ENCODE measurements at regions of chr17 and their contacts with region 1.

Region 1: DNA sequence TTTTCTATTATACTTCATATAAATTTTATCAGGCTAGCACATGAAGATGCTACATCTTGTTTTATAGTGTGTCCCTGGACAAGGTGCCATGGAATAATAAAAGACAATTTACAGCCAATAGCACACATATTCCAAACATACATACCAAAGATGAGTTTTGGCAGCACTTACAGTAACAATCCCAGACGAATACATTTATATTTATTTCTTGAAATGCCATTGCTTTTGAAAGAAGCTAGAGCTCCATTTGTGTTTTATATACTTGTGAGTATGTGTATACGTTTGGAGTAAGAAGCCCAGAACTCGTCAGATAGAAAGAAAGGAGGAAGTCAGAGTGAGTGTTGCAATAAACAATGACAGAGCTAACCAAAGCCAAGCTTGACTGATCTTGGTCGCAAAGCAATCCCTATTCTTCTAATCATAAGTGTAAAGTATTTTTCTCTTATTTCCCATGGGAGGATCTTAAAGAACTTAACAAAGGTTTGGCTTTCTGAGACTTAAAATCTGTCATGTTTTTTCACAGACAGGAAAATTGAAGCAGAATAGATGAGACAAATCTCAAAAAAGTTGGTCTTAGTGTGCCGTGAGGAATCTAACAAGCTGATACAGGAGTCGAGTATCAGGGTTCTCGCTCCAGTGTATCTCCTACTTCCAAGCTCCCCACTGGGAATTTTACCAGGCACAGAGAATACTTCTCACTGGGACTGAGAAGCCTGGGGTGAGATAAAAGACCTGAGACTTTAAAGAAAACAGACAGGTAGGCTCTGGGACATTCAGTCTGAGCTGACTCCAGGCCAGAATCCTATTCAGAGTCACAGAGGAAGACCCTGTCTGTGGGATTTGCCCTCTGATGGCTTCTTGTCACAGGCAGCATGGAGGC is 175.4 kb downstream of the AATF start:
- DNase-seq: peak; percentile 29 to 79 (median 67)
- H3K4me3 ChIP-seq: no peak overlapping the region
- H3K27ac ChIP-seq: no peak overlapping the region
- H3K4me1 ChIP-seq: peaks cover 2 to 18% (median 5%) of the 10 kb centered on the region in 4 experiments
- H3K27me3 ChIP-seq: no peaks in the 10 kb centered on the region

Region 2: DNA sequence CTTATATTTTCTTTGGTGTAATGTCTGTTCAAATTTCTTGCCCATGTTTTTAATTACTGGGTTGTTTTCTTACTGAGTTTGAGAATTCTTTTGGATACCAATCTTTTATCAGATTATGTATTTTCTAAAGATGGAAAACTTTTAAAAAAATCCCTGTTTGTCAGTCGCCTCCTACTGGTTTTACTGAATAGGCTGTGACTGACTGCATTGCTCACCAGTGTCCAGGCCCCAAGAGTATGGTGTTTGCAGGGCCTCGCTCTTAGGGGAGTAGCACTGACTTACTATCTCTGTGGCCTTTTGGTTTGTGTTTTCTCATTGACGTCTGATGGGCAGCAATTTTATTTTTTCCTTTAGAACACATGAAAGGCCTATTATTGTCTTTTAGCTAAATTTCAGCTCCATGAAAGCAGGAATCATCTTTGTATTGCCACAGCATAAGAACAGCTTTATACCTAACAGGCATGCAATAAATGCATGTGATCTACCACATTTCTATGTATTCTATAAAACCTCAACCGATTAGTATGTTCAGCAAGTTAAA is 13.0 kb after region 1 on chr17:
- CTCF ChIA-PET with region 1: interaction called, 10 read pairs
- POLR2A ChIA-PET with region 1: no interaction called
- DNase-seq: no peak
- H3K4me3 ChIP-seq: no peak overlapping the region
- H3K27ac ChIP-seq: no peak overlapping the region
- H3K4me1 ChIP-seq: peaks cover 0 to 24% (median 12%) of the 10 kb centered on the region in 4 experiments
- H3K27me3 ChIP-seq: no peaks in the 10 kb centered on the region